ENCODE measurements at regions of chr16 and their contacts with region 1.

Region 1: GRCh38 chr16:72104905-72105304 is 11.3 kb downstream of the DHX38 start:
- DNase-seq: no peak
- ATAC-seq: peak in 1 of 4 donors; percentile 12
- H3K4me3 ChIP-seq: no peak overlapping the region
- H3K27ac ChIP-seq: no peak overlapping the region
- H3K4me1 ChIP-seq: no peaks in the 10 kb centered on the region
- H3K27me3 ChIP-seq: no peaks in the 10 kb centered on the region
- CTCF ChIP-seq: no peak
- POLR2A ChIP-seq: no peak

Region 2: GRCh38 chr16:72066747-72067146 is 38.2 kb before region 1 on chr16:
- intact Hi-C with region 1: loop called in 1 of 2 experiments (anchors 5 kb)
- DNase-seq: no peak
- ATAC-seq: peak in 3 of 4 donors; percentile 39 to 50 (median 44)
- H3K4me3 ChIP-seq: no peak overlapping the region
- H3K27ac ChIP-seq: no peak overlapping the region
- H3K4me1 ChIP-seq: peaks cover 0 to 19% (median 0%) of the 10 kb centered on the region in 4 donors
- H3K27me3 ChIP-seq: no peaks in the 10 kb centered on the region
- CTCF ChIP-seq: peak; percentile 59 to 66 (median 60)
- POLR2A ChIP-seq: no peak

Region 3: DNA sequence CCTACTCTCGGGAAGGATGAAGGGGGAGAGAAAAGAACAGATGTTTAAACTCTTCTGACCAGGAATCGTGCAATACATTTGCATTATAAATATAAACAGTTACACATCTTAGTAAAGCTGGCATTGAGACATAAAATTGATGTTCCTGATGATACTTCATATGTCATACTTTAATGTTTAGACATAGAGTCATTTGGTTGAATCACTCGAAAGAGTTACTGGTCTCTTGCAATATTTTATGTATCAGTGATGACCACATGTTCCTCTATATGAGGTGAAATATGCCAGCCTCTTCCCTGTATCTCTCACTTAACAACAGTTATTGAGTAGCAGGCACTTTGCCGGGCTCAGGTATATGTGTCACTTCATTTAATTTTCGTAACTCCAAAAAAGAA is 116.7 kb after region 1 on chr16:
- intact Hi-C with region 1: no loop called
- DNase-seq: no peak
- ATAC-seq: no peak
- H3K4me3 ChIP-seq: no peak overlapping the region
- H3K27ac ChIP-seq: no peak overlapping the region
- H3K4me1 ChIP-seq: peaks cover 0 to 9% (median 0%) of the 10 kb centered on the region in 4 donors
- H3K27me3 ChIP-seq: no peaks in the 10 kb centered on the region
- CTCF ChIP-seq: no peak
- POLR2A ChIP-seq: no peak

Measured in right lobe of liver (tissue), 6 donors.